B cell (primary cell): ENCODE measurements at regions of chr12 and their contacts with region 1.

Region 1: DNA sequence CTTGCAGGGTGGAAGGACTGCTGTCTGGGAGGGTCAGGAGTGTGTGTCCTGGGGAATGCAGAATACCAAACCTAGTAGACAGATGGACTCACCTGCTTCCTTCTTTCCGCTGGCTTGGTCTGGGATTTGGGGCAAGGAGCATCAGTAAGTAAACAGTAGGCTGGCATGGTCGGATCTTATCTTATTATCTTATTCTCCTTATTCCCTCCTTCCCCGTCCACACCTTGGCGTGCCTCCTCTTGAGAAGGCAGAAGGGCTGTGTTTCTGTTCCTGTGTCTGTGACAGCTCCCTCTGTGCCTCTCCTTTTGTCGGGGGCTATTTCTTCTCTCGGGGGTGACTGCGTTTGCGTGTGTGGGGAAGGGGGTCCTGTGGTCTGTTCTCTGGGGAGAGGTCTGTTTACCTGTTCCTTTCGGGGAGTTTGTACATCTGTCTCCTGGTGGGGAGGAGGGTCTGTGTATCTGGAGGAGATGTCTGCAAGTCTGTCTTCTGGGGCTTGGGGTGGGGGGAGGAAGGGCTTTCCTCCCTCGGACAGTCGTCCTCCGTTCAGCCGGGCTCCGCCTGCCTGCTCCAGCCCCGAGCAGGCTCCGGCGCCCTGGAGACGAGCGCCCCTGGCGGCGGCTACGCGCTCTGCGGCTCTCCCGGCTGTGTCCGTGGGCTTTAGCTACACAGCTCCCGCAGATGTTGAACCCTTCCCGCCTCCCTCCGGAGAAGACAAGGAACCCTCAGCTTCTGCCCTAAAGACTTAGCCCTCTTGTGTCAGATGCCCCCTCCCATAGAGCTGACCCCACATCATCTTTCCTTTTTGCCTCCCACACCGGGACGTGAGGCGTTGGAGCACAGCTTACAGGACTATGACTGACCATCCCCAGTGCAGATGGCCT is 4.3 kb downstream of the KRT86 start:
- DNase-seq: peak; percentile 64
- ATAC-seq: peak; percentile 81
- H3K4me3 ChIP-seq: no peak overlapping the region
- H3K4me3 Mint-ChIP-seq: no peak overlapping the region
- H3K27ac ChIP-seq: no peak overlapping the region
- H3K27ac Mint-ChIP-seq: no peak overlapping the region
- H3K4me1 ChIP-seq: peaks cover 4% of the 10 kb centered on the region in 2 donors
- H3K4me1 Mint-ChIP-seq: peaks cover 6% of the 10 kb centered on the region
- H3K27me3 ChIP-seq: peaks cover 0 to 29% (median 5%) of the 10 kb centered on the region in 4 experiments
- H3K27me3 Mint-ChIP-seq: peaks cover 61% of the 10 kb centered on the region
- CTCF ChIP-seq: peak; percentile 93

Region 2: GRCh38 chr12:52311285-52311648 is 32.5 kb after region 1 on chr12:
- CTCF ChIA-PET with region 1: interaction called, 11 read pairs
- POLR2A ChIA-PET with region 1: no interaction called
- intact Hi-C with region 1: no loop called
- DNase-seq: no peak
- ATAC-seq: no peak
- H3K4me3 ChIP-seq: no peak overlapping the region
- H3K4me3 Mint-ChIP-seq: no peak overlapping the region
- H3K27ac ChIP-seq: no peak overlapping the region
- H3K27ac Mint-ChIP-seq: no peak overlapping the region
- H3K4me1 ChIP-seq: no peaks in the 10 kb centered on the region
- H3K4me1 Mint-ChIP-seq: peaks cover 3% of the 10 kb centered on the region
- H3K27me3 ChIP-seq: peaks cover 0 to 38% (median 11%) of the 10 kb centered on the region in 4 experiments
- H3K27me3 Mint-ChIP-seq: peaks cover 59% of the 10 kb centered on the region
- CTCF ChIP-seq: no peak